ENCODE measurements at regions of chr5 and their contacts with region 1.

Region 1: DNA sequence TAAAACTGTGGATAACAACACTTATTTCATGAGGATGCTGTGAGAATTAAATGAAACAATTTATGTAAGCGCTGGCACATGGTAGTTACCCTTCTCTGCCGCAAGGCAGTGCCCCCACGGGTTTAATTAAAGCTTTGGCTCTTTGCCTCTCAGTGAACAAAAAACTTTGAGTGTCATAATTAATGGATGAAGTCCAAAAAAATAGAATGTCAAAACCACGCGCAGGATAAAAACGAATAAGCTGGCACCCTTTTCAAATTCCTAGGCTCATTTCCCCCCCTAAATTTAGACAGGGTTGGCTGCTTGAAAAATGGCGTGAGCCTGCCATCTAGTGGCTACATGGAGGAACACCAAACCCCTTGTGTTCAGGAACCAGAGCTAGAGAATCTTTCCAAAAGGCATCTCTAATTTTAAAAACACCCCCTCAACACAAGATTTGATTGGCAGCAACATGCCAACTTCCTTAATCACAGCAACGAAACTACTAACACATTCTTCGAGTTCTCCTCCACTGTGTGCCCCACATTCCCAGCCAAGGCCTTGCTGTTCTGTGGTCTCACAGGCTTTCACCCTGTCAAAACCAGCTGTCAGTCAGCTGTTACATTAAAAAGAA is 29.0 kb upstream of the CCNG1 start:
- DNase-seq: peak; percentile 42
- ATAC-seq: peak; percentile 95
- H3K4me3 ChIP-seq: no peak overlapping the region
- H3K27ac ChIP-seq: no peak overlapping the region
- H3K4me1 ChIP-seq: no peaks in the 10 kb centered on the region
- H3K27me3 ChIP-seq: no peaks in the 10 kb centered on the region
- CTCF ChIP-seq: peak; percentile 79 to 97 (median 88)
- POLR2A ChIP-seq: no peak
- RAD21 ChIP-seq: peak; percentile 83

Region 2: DNA sequence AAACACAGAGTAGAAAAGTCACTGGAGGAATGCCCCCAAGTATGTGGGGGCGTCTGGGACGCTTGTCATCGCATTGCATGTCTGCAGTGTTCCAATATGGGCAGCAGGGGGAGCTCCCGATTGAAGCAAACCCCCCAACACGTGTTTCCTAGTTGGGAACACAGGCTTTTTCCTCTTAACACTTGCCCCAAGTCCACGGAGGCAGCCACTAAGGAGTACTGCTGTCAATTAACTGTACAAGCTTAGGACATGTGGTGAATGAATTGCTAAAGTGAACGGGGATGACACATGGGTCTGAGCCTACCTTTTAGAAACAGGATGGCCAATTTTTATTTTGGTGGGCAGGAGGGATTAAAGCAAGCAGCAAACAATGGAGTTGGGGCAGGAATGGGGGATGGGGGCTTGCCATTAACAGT is 1864.1 kb before region 1 on chr5:
- CTCF ChIA-PET with region 1: no interaction called
- POLR2A ChIA-PET with region 1: no interaction called
- RAD21 ChIA-PET with region 1: interaction called in 1 of 2 experiments, 3 read pairs
- intact Hi-C with region 1: loop called (anchors 10 kb)
- DNase-seq: peak; percentile 2
- ATAC-seq: peak; percentile 50
- H3K4me3 ChIP-seq: no peak overlapping the region
- H3K27ac ChIP-seq: no peak overlapping the region
- H3K4me1 ChIP-seq: no peaks in the 10 kb centered on the region
- H3K27me3 ChIP-seq: no peaks in the 10 kb centered on the region
- CTCF ChIP-seq: peak; percentile 11 to 68 (median 67); a peak in 4 of 6 replicates
- POLR2A ChIP-seq: no peak
- RAD21 ChIP-seq: peak; percentile 33; the same call in 1 of the 2 replicates

Region 3: GRCh38 chr5:161851691-161852299 is 1556.6 kb before region 1 on chr5:
- CTCF ChIA-PET with region 1: no interaction called
- POLR2A ChIA-PET with region 1: no interaction called
- RAD21 ChIA-PET with region 1: no interaction called
- intact Hi-C with region 1: loop called (anchors 2 kb)
- DNase-seq: no peak
- ATAC-seq: no peak
- H3K4me3 ChIP-seq: no peak overlapping the region
- H3K27ac ChIP-seq: no peak overlapping the region
- H3K4me1 ChIP-seq: no peaks in the 10 kb centered on the region
- H3K27me3 ChIP-seq: no peaks in the 10 kb centered on the region
- CTCF ChIP-seq: peak in 2 of 3 experiments; percentile 16 to 43; a peak in 3 of 6 replicates
- POLR2A ChIP-seq: no peak
- RAD21 ChIP-seq: peak; percentile 35; the same call in 1 of the 2 replicates

Region 4: DNA sequence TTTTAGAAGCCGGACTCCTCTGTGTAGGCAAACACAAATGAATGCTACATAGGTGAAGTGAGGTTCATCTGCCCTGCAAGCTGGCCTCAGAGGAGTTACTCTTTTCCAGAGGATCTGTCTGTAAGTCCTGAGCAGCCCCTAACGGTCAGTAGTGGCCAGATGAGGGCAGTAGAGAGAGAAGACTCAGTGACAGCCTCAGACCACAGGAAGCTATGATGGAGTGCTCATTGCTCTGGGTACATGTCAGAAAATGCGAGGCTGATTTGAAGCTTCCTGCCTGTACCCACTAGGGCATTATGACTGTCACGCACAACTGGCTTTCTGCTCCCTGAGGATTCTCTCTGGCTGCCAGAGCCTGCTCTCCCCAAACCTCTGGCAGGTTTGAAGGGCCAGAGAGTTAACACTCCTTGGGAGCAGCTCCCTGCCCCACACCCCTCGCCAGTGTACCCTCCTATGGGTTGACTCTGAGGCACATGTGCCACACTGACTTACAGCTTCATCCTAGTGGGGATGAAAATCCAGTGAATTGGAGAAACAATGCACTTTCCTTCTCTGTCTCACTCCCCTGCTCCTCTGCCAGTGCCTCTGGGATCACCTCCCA is 1199.3 kb before region 1 on chr5:
- CTCF ChIA-PET with region 1: interaction called, 6 read pairs
- POLR2A ChIA-PET with region 1: no interaction called
- RAD21 ChIA-PET with region 1: no interaction called
- intact Hi-C with region 1: loop called (anchors 1 kb)
- DNase-seq: peak; percentile 24
- ATAC-seq: peak; percentile 96
- H3K4me3 ChIP-seq: no peak overlapping the region
- H3K27ac ChIP-seq: no peak overlapping the region
- H3K4me1 ChIP-seq: no peaks in the 10 kb centered on the region
- H3K27me3 ChIP-seq: no peaks in the 10 kb centered on the region
- CTCF ChIP-seq: peak in 2 of 3 experiments; percentile 56 to 64; a peak in 4 of 6 replicates
- POLR2A ChIP-seq: no peak
- RAD21 ChIP-seq: peak; percentile 31

Region 5: GRCh38 chr5:163104464-163104863 is 304.0 kb before region 1 on chr5:
- CTCF ChIA-PET with region 1: no interaction called
- POLR2A ChIA-PET with region 1: no interaction called
- RAD21 ChIA-PET with region 1: no interaction called
- intact Hi-C with region 1: loop called (anchors 10 kb)
- DNase-seq: no peak
- ATAC-seq: no peak
- H3K4me3 ChIP-seq: no peak overlapping the region
- H3K27ac ChIP-seq: no peak overlapping the region
- H3K4me1 ChIP-seq: no peaks in the 10 kb centered on the region
- H3K27me3 ChIP-seq: no peaks in the 10 kb centered on the region
- CTCF ChIP-seq: peak in 2 of 3 experiments; percentile 25 to 52; a peak in 3 of 6 replicates
- POLR2A ChIP-seq: no peak
- RAD21 ChIP-seq: 0 out of 2 replicates have a peak, but pooled peaks have one; percentile 10

Region 6: GRCh38 chr5:163306421-163306820 is 102.0 kb before region 1 on chr5:
- CTCF ChIA-PET with region 1: interaction called, 22 read pairs
- POLR2A ChIA-PET with region 1: no interaction called
- RAD21 ChIA-PET with region 1: interaction called in 1 of 2 experiments, 4 read pairs
- intact Hi-C with region 1: loop called (anchors 2 kb)
- DNase-seq: peak; percentile 6
- ATAC-seq: peak; percentile 72
- H3K4me3 ChIP-seq: no peak overlapping the region
- H3K27ac ChIP-seq: no peak overlapping the region
- H3K4me1 ChIP-seq: no peaks in the 10 kb centered on the region
- H3K27me3 ChIP-seq: peaks cover 11% of the 10 kb centered on the region; the same call in 1 of the 2 replicates
- CTCF ChIP-seq: peak; percentile 28 to 59 (median 40); a peak in 5 of 6 replicates
- POLR2A ChIP-seq: no peak
- RAD21 ChIP-seq: peak; percentile 31; the same call in 1 of the 2 replicates

Region 7: DNA sequence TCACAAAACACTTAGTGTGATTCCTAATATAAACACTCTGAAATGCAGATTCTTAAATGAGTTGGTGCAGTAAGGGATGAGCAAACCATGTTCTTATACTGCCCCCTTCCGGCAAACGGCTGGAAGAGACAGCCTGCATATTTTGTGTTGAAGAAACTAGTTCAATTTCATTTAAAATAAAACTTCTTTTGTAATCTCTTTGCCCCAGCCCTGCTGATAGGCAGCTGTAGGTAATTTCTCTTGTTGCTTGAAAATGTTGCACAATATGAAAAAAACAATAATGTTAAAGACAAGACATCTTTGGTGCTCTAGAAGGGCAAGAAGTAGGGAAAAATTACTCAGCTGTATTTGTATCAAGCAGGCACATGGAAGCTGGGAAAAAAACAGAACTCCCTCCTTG is 60.7 kb before region 1 on chr5:
- CTCF ChIA-PET with region 1: interaction called, 18 read pairs
- POLR2A ChIA-PET with region 1: no interaction called
- RAD21 ChIA-PET with region 1: no interaction called
- intact Hi-C with region 1: loop called (anchors 2 kb)
- DNase-seq: peak; percentile 51
- ATAC-seq: peak; percentile 82
- H3K4me3 ChIP-seq: no peak overlapping the region
- H3K27ac ChIP-seq: no peak overlapping the region
- H3K4me1 ChIP-seq: no peaks in the 10 kb centered on the region
- H3K27me3 ChIP-seq: 0 out of 2 replicates have a peak, but pooled peaks cover 10% of the 10 kb centered on the region
- CTCF ChIP-seq: peak; percentile 53 to 92 (median 81); a peak in 5 of 6 replicates
- POLR2A ChIP-seq: no peak
- RAD21 ChIP-seq: peak; percentile 82

Region 8: GRCh38 chr5:163437309-163438182 is 29.1 kb after region 1 on chr5 and contains the start of gene CCNG1:
- CTCF ChIA-PET with region 1: no interaction called
- POLR2A ChIA-PET with region 1: no interaction called
- RAD21 ChIA-PET with region 1: no interaction called
- intact Hi-C with region 1: no loop called
- DNase-seq: peak; percentile 92
- ATAC-seq: peak; percentile 95
- H3K4me3 ChIP-seq: peak within 1 kb of the TSS; percentile 72 to 87
- H3K27ac ChIP-seq: peak within 1 kb of the TSS; percentile 88
- H3K4me1 ChIP-seq: peaks cover 0 to 14% of the 10 kb centered on the region in 2 experiments; a peak in 3 of 4 replicates
- H3K27me3 ChIP-seq: no peaks in the 10 kb centered on the region
- CTCF ChIP-seq: no peak
- POLR2A ChIP-seq: no peak
- RAD21 ChIP-seq: no peak
- total RNA-seq, gene CCNG1: 176 TPM

Region 9: DNA sequence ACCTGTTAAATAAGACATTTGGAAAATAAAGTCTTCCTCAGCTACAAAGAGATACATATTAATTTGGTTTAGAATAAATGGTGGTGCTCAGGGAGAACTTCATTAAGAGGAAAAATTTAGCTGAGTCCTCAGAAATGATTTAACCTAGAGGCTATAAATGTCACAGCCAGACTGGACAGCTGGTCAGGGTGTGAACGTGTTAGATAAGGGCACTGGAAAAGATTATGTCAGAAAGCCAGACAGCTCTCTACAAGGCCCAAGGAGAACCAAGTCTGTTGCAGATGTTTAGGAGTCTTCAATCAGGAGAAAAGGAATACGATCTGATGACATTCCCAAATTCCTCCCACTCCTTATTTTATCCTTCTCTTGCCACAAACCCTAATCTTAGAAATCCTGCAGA is 362.2 kb after region 1 on chr5:
- CTCF ChIA-PET with region 1: no interaction called
- POLR2A ChIA-PET with region 1: no interaction called
- RAD21 ChIA-PET with region 1: no interaction called
- intact Hi-C with region 1: no loop called
- DNase-seq: no peak
- ATAC-seq: no peak
- H3K4me3 ChIP-seq: no peak overlapping the region
- H3K27ac ChIP-seq: no peak overlapping the region
- H3K4me1 ChIP-seq: no peaks in the 10 kb centered on the region
- H3K27me3 ChIP-seq: 0 out of 2 replicates have a peak, but pooled peaks cover 3% of the 10 kb centered on the region
- CTCF ChIP-seq: no peak
- POLR2A ChIP-seq: no peak
- RAD21 ChIP-seq: no peak